IMR-90 (cell line): ENCODE measurements at regions of chr2 and their contacts with region 1.

Region 1: DNA sequence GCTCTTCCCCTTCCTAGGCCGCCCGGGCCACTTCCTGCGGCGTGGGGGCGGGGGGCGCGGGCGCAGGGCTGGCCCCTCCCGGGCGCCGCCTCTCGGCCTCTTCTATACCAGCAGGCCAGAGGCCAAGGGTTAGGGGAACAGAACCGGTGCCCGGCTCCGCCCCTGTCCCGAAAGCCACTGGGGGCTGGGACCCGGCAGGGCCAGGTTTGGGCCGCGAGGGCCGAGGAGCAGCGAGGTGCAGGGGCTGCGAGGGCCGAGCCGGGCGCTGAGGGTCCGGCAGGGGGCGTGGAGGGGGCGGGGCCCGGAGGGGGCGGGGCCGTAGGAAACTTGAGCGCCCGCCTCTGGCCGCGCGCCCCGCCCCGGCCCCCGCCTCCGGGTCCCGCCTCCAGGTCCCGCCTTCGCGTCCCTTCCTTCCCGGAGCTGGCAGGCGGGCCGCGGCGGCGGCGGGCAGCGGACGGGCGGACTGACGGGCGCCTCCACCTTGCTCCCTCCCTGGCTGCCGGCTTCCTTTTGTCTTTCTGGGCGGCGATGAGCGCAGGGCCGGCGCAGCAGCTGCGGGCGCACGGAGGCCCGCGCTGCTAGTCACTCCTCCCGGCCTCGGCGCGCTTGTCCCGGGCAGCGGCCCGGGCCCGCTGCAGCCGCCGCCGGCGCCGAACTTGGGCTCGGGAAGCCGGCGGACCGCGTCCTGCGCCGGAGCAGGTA is at the start of gene HPCAL1:
- DNase-seq: peak; percentile 70
- ATAC-seq: peak; percentile 88
- H3K4me3 ChIP-seq: peak within 1 kb of the TSS; percentile 72
- H3K27ac ChIP-seq: peak within 1 kb of the TSS; percentile 78
- H3K4me1 ChIP-seq: peaks cover 12% of the 10 kb centered on the region; the same call in 1 of the 2 replicates
- H3K27me3 ChIP-seq: no peaks in the 10 kb centered on the region
- CTCF ChIP-seq: peak; percentile 51
- POLR2A ChIP-seq: peak; percentile 56; the same call in 1 of the 2 replicates
- RAD21 ChIP-seq: no peak; the same call in 1 of the 2 replicates
- total RNA-seq, gene HPCAL1: 8.2 and 9.4 TPM in 2 replicates

Region 2: DNA sequence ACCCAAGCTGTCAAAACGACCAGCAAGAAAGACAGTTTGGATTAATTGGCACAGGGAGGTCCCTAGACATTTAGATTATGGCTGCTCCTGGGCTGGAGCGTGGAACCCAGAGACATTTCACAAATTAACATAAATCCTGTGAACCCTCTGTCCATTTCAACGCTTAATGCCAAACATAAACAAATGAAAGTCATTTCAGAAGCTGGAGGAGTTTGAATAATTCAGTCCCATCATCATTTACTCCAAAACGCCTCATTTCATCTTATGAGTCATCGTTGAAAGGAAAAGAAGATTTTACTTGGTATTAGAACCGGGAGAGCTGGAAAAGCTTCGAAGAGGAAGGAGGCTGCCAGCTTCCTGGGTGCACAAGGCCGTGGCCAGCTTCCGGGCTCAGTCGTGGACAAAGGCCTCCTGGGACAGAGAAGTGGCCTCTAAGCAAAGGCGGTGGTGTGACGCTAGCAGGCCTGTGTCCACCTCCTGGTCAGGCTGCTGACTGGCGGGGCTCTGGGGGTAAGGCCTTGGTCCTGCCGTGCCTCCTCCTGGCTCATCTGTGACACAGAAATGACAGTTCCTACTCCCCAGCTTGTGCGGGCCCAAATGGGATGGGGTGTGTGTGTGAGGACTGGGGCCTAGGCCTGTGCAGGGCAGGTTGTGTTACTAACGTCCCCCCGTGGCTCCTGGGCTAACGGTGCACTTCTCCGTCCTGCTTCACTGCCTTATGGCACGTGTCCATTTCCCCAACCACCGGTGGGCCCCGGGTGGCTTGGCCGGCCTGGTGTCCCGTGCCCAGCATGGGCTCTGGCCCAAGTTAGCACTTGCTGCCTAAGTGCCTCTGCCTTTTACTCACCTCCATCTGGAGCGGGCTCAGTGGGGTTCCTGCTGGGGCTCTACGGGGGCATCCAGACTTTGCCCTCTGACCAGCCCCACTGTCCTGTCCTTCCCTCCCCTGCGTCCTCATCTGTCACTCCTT is 108.5 kb before region 1 on chr2:
- CTCF ChIA-PET with region 1: no interaction called
- POLR2A ChIA-PET with region 1: no interaction called
- dilution Hi-C with region 1: no loop called
- in situ Hi-C with region 1: no loop called
- intact Hi-C with region 1: loop called (anchors 5 kb)
- DNase-seq: peak; percentile 65
- ATAC-seq: peak; percentile 70
- H3K4me3 ChIP-seq: no peak overlapping the region
- H3K27ac ChIP-seq: peak overlapping the region; percentile 42
- H3K4me1 ChIP-seq: peaks cover 14% of the 10 kb centered on the region
- H3K27me3 ChIP-seq: no peaks in the 10 kb centered on the region
- CTCF ChIP-seq: no peak
- POLR2A ChIP-seq: no peak
- RAD21 ChIP-seq: no peak

Region 3: GRCh38 chr2:10448208-10448645 is 145.6 kb after region 1 on chr2 and contains the start of gene ODC1:
- CTCF ChIA-PET with region 1: no interaction called
- POLR2A ChIA-PET with region 1: no interaction called
- dilution Hi-C with region 1: no loop called
- in situ Hi-C with region 1: no loop called
- intact Hi-C with region 1: no loop called
- DNase-seq: peak; percentile 90
- ATAC-seq: peak; percentile 93
- H3K4me3 ChIP-seq: peak within 1 kb of the TSS; percentile 92
- H3K27ac ChIP-seq: peak within 1 kb of the TSS; percentile 88
- H3K4me1 ChIP-seq: peaks cover 10% of the 10 kb centered on the region
- H3K27me3 ChIP-seq: no peaks in the 10 kb centered on the region
- CTCF ChIP-seq: no peak
- POLR2A ChIP-seq: peak; percentile 92
- RAD21 ChIP-seq: no peak
- total RNA-seq, gene ODC1: 204 and 251 TPM in 2 replicates